Astrocyte of the cerebellum (primary cell): ENCODE measurements at regions of chr19 and their contacts with region 1.

Region 1: DNA sequence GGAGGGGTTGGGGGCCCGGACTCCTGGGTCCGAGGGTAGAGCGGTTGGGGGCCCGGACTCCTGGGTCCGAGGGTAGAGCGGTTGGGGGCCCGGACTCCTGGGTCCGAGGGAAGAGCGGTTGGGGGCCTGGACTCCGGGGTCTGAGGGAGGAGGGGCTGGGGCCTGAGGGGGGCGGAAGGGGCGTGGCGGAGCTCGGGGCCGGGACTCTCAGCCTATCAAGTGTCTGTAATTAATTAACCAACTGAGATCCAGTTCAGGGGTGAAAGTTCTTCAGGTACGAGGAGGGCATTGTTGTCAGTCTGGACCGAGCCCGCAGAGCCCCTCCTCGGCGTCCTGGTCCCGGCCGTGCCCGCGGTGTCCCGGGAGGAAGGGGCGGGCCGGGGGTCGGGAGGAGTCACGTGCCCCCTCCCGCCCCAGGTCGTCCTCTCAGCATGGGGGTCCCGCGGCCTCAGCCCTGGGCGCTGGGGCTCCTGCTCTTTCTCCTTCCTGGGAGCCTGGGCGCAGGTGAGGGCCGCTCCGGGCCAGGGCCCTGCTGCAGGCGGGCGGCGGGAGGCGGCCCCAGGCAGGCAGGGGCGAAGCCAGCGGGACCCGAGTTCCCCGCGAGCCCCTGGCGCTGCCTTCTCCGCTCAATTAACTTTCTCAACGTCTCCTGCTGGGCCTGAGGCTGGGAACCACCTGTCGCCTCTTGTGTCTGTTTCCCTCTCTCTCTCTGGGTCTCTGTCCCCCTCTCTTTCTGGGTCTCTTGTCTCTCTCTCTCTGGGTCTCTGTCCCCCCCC is 697 bp downstream of the FCGRT start:
- DNase-seq: no peak
- H3K4me3 ChIP-seq: peak overlapping the region; percentile 78
- CTCF ChIP-seq: no peak

Region 2: GRCh38 chr19:49560358-49560900 is 47.3 kb after region 1 on chr19:
- in situ Hi-C with region 1: loop called (anchors 5 kb)
- DNase-seq: no peak
- H3K4me3 ChIP-seq: no peak overlapping the region
- CTCF ChIP-seq: no peak

Region 3: GRCh38 chr19:49580264-49581006 is 67.3 kb after region 1 on chr19 and contains the start of gene NOSIP:
- in situ Hi-C with region 1: no loop called
- DNase-seq: peak; percentile 95
- H3K4me3 ChIP-seq: peak within 1 kb of the TSS; percentile 93
- CTCF ChIP-seq: no peak

Region 4: DNA sequence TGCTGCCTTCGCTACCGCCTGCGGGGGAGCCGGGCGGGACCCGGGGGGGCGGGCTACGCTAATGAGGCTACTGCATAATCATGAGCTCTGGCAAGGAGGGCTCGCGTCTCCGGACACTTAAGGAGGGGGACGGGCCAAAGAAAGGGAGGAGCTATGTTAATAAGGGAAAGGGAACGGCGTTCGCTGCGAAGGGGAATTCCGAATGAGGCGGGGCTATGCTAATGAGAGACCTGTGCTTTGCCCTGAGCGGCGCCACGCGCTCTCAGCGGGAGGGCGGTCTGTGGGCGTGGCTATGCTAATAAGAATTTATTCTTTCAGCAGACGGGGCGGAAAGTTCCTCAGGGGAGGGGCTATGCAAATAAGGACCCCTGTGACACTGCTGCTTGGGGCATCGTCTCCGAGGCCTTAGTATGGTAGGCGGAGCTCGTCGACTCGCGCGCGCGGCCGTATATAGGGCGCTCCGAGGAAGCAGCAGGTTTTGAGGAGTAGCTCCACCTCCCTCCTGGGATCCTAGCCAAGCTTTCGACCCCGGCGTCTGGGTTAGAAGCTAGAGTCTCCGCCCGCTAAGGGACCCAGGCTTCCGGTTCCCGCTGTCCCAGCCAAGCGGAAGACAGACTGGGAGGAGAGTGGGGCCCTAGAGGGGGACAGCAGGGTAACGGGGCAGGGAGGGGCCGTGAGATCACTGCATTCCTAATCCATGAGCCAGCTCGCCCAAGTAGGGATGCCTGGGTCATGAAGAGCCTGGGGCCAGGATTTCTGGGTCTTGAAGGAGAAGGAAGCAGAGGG is 127.1 kb after region 1 on chr19 and contains the start of gene RRAS:
- in situ Hi-C with region 1: loop called (anchors 10 kb)
- DNase-seq: peak; percentile 99
- H3K4me3 ChIP-seq: peak within 1 kb of the TSS; percentile 69
- CTCF ChIP-seq: no peak

Region 5: DNA sequence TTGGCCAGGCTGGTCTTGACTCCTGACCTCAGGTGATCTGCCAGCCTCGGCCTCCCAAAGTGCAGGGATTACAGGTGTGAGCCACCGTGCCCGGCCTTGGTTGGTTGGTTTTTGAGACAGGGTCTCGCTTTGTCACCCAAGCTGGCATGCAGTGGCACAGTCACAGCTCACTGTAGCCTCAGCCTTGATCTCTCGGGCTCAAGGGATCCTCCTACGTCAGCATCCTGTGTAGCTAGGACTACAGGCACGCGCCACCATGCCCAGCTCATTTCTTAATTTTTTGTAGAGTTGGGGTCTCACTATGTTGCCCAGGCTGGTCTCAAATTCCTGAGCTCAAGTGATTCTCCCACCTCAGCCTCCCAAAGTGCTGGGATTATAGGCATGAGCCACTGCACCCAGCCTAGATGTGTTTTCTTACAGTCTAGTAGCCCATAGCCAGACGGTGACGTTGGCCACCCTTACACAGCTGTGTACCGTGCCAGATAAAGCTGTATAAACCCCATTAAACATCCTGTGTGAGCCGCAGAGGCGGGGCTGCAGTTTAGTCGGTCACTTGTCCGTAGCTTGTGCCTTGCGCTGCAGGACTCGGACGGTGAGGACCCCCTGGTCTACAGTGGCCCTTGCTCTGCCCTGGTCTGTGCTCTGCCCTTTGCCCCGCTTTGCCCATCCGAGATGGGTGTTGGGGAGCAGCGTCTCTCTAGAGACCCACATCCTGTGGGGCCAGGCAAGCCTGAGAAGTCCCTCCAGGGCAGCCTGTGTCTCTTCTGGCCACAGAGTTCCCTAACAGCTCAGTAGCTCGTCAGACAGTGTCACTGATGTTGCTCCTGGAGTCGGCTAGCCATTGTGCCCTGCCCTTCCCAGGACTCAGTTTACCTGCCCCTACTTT is 142.7 kb after region 1 on chr19:
- in situ Hi-C with region 1: no loop called
- DNase-seq: no peak
- H3K4me3 ChIP-seq: no peak overlapping the region
- CTCF ChIP-seq: no peak